A673 (cell line): ENCODE measurements at regions of chr1 and their contacts with region 1.

Region 1: GRCh38 chr1:3518256-3518655 is 63.8 kb downstream of the ARHGEF16 start:
- DNase-seq: no peak
- H3K4me3 ChIP-seq: no peak overlapping the region
- H3K27ac ChIP-seq: no peak overlapping the region
- H3K4me1 ChIP-seq: no peaks in the 10 kb centered on the region
- H3K27me3 ChIP-seq: no peaks in the 10 kb centered on the region
- CTCF ChIP-seq: peak; percentile 61

Region 2: DNA sequence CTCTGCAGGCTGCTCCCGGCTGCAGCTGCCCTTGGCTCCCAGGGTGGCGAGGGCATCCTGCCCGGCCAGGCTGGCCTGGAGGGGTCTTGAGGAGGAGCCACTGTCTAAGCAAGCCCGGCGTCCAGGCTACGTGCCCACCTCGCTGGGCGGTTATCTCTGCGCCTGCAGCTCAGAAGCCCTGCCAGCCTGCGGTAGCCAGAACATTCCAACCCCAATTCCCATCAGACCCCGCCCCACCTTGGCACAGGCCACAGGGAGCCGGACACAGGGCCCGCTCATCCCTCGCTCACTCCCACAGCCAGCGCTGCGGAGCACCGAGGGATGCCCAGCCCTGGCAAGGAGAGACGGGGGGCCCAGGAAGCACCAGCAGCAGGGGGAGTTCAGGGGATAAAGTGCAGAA is 39.1 kb after region 1 on chr1:
- CTCF ChIA-PET with region 1: interaction called, 10 read pairs
- POLR2A ChIA-PET with region 1: no interaction called
- intact Hi-C with region 1: no loop called
- DNase-seq: no peak
- H3K4me3 ChIP-seq: no peak overlapping the region
- H3K27ac ChIP-seq: no peak overlapping the region
- H3K4me1 ChIP-seq: no peaks in the 10 kb centered on the region
- H3K27me3 ChIP-seq: no peaks in the 10 kb centered on the region
- CTCF ChIP-seq: no peak